Naive thymus-derived CD4-positive, alpha-beta T cell (primary cell): ENCODE measurements at regions of chr19 and their contacts with region 1.

Region 1: DNA sequence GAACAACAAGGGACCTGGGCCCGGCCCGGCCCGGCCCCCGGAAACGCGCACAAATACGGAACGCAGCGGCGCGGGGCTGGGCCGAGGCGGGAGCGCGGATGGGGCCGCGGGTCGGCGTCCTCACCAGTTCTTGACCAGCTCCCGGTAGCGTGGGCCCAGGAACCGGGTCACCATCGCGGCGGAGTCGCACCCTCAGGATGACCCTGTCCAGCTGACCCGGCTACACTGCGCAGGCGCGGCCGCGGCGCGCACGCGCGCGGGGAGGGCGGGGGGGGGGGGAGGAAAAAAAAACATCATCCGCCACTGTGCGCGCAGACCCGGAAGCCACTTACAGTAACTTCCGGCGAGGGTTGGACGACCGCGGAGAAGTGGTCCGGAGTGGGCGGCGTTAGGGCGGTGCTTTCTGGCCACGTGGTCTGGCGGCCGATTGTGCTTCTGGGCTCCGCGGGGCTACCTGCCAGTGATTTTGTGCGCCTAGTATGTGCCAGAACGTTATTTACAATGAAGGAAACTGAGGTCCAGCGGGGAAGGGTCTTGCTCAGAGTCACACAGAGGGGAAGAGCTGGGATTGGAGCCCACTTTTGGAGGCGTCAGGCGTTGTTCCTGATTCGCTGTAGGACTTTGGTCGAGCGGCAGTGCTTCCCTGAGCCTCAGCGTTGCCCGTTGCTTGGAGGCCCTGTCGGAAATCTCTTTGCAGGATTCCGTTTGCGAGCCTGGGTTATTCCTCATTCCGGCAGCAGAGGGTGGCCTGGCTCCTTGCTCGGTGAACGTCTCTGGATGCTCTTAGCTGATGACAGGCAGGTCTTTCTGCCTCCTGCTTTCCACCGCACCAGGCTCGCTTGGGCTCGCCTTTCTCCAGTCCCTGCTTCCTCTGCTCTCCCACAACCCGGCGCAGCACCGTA is at the start of gene UQCR11:
- DNase-seq: peak; percentile 76 to 94 (median 91)
- ATAC-seq: peak; percentile 89
- H3K4me3 ChIP-seq: peak within 1 kb of the TSS; percentile 79
- H3K4me3 Mint-ChIP-seq: peak within 1 kb of the TSS; percentile 92 to 99 (median 96)
- H3K27ac ChIP-seq: peak within 1 kb of the TSS; percentile 97
- H3K27ac Mint-ChIP-seq: peak within 1 kb of the TSS; percentile 92 to 100 (median 98)
- H3K4me1 ChIP-seq: peaks cover 28 to 40% of the 10 kb centered on the region in 2 donors
- H3K4me1 Mint-ChIP-seq: peaks cover 20 to 63% (median 44%) of the 10 kb centered on the region in 7 donors
- H3K27me3 ChIP-seq: no peaks in the 10 kb centered on the region
- H3K27me3 Mint-ChIP-seq: no peaks in the 10 kb centered on the region
- total RNA-seq, gene UQCR11: 94.3 to 170 (median 123) TPM

Region 2: DNA sequence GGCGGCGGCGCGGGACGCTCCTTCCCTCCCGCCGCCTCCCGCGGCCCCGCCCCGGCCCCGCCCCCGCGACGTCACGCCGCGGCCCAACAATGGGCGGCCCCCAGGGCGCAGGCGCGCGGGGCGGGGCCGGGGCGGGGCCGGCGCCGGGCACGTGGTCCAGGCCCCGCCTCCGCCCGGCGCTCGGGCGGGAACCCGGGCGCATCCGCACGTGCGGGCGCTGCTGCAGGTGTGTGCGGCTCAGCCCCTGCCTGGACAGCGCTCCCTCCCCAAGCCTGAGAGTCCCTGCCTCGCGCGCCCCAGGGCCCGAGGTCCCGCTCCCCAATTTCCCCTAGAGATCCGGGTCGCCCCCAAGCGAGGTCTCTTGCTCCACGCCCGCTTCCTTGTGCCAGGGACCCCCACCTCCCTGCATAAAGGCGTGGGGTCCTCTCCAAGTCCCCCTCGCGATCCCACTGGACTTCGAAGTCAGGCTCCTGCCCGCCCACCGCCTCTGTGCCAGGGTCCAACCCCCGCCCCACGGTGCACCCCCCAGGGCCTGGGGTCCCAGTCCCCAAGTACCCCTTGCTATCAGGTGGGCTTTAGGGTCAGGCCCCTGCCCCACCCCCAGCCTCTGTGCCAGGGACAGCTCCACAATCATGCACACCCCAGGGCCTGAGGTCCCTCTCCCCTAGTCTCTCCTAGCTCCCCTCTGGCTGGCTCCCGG is 37.0 kb before region 1 on chr19 and contains the start of gene MEX3D:
- CTCF ChIA-PET with region 1: interaction called, 3 read pairs
- POLR2A ChIA-PET with region 1: interaction called, 3 read pairs
- intact Hi-C with region 1: loop called in 1 of 2 experiments (anchors 1 kb)
- DNase-seq: peak; percentile 64 to 86 (median 81)
- ATAC-seq: peak; percentile 98
- H3K4me3 ChIP-seq: no peak within 1 kb of the TSS
- H3K4me3 Mint-ChIP-seq: peak within 1 kb of the TSS in 8 of 10 donors; percentile 3 to 78 (median 50)
- H3K27ac ChIP-seq: no peak within 1 kb of the TSS
- H3K27ac Mint-ChIP-seq: peak within 1 kb of the TSS in 1 of 9 donors; percentile 52
- H3K4me1 ChIP-seq: peaks cover 5 to 6% of the 10 kb centered on the region in 2 donors
- H3K4me1 Mint-ChIP-seq: peaks cover 0 to 8% (median 3%) of the 10 kb centered on the region in 7 donors
- H3K27me3 ChIP-seq: no peaks in the 10 kb centered on the region
- H3K27me3 Mint-ChIP-seq: peaks cover 0 to 32% (median 6%) of the 10 kb centered on the region in 5 donors
- total RNA-seq, gene MEX3D: 2.1 to 8.3 (median 2.3) TPM

Region 3: GRCh38 chr19:1652471-1653299 is 47.2 kb after region 1 on chr19 and contains the start of gene TCF3:
- CTCF ChIA-PET with region 1: interaction called, 11 read pairs
- POLR2A ChIA-PET with region 1: interaction called, 50 read pairs
- intact Hi-C with region 1: loop called (anchors 1 kb)
- DNase-seq: peak; percentile 96 to 100 (median 99)
- ATAC-seq: peak; percentile 96
- H3K4me3 ChIP-seq: peak within 1 kb of the TSS; percentile 86
- H3K4me3 Mint-ChIP-seq: peak within 1 kb of the TSS; percentile 86 to 96 (median 91)
- H3K27ac ChIP-seq: peak within 1 kb of the TSS; percentile 99
- H3K27ac Mint-ChIP-seq: peak within 1 kb of the TSS; percentile 87 to 98 (median 95)
- H3K4me1 ChIP-seq: peaks cover 4 to 8% of the 10 kb centered on the region in 2 donors
- H3K4me1 Mint-ChIP-seq: peaks cover 7 to 14% (median 10%) of the 10 kb centered on the region in 7 donors
- H3K27me3 ChIP-seq: no peaks in the 10 kb centered on the region
- H3K27me3 Mint-ChIP-seq: peaks cover 0 to 4% (median 0%) of the 10 kb centered on the region in 5 donors
- total RNA-seq, gene TCF3: 66.6 to 83.6 (median 78.3) TPM

Region 4: DNA sequence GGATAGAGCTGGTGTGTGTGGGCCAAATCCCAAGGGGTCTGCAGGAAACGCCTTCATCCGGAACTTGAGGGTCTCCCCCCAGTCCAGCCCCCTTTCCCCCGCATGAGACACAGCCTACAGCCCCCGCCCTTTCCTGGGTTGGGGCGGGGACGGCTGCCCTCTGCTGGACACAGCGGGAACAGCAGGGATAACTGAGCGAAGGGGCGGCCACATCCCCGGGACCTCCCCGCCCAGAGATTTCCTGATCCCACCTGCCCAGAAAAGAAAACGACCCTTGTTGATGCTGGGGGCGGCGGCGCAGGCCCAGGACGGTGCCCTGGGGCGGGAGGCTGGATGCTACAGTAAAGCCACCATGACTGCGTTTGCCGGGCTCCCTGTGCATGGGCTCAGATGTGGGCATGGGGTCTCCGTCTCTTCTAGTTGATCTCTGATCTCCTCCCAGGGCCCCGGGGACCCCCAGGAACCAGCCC is 162.0 kb after region 1 on chr19:
- CTCF ChIA-PET with region 1: no interaction called
- POLR2A ChIA-PET with region 1: no interaction called
- intact Hi-C with region 1: loop called in 1 of 2 experiments (anchors 1 kb)
- DNase-seq: peak; percentile 26 to 77 (median 60)
- ATAC-seq: peak; percentile 89
- H3K4me3 ChIP-seq: no peak overlapping the region
- H3K4me3 Mint-ChIP-seq: no peak overlapping the region
- H3K27ac ChIP-seq: no peak overlapping the region
- H3K27ac Mint-ChIP-seq: no peak overlapping the region
- H3K4me1 ChIP-seq: no peaks in the 10 kb centered on the region
- H3K4me1 Mint-ChIP-seq: no peaks in the 10 kb centered on the region
- H3K27me3 ChIP-seq: peaks cover 13 to 16% of the 10 kb centered on the region in 2 donors
- H3K27me3 Mint-ChIP-seq: peaks cover 58 to 86% (median 66%) of the 10 kb centered on the region in 5 donors

Region 5: GRCh38 chr19:1789261-1790041 is 184.0 kb after region 1 on chr19:
- CTCF ChIA-PET with region 1: no interaction called
- POLR2A ChIA-PET with region 1: no interaction called
- intact Hi-C with region 1: no loop called
- DNase-seq: no peak
- ATAC-seq: no peak
- H3K4me3 ChIP-seq: no peak overlapping the region
- H3K4me3 Mint-ChIP-seq: peak overlapping the region in 2 of 10 donors; percentile 5 to 34
- H3K27ac ChIP-seq: no peak overlapping the region
- H3K27ac Mint-ChIP-seq: no peak overlapping the region
- H3K4me1 ChIP-seq: no peaks in the 10 kb centered on the region
- H3K4me1 Mint-ChIP-seq: peaks cover 0 to 2% (median 0%) of the 10 kb centered on the region in 7 donors
- H3K27me3 ChIP-seq: no peaks in the 10 kb centered on the region
- H3K27me3 Mint-ChIP-seq: peaks cover 4 to 15% (median 5%) of the 10 kb centered on the region in 5 donors

Region 6: DNA sequence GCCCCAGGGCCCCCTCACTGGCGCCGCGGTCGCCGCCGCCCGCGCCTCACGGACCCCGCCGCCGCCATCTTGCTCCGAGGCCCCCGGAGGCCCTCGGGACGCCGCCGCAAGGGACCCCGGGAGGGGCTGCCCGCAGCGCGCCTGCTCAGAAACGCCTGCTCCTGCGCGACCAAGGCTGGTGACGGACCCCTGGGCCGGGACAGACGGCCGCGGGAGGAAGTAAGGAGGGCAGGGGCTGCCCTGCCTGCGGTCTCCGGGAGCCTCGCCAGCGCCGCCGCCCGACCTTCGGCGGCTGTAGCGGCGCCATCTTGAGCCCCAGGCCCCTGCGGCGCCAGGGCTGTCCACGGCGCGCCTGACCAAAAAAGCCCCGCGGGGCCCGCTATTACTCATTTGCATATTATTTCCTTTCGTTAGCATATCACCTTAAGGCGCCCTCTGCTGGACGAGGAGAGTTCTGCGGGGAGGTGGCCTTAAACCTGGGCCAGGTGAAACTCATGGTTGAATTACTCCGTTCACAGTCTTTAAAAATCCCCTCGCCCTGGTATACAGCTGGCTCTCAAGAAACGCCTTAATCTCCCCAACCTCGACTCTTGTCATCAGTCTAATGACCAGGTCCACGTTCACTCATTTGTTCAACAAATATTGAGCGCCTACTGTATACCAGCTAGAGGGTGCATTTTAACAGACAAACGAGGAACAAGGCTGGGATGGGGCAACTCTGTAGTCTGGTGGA is 243.1 kb after region 1 on chr19 and contains the start of gene REXO1:
- CTCF ChIA-PET with region 1: no interaction called
- POLR2A ChIA-PET with region 1: no interaction called
- intact Hi-C with region 1: loop called (anchors 1 to 2 kb)
- DNase-seq: peak; percentile 96 to 100 (median 98)
- ATAC-seq: peak; percentile 90
- H3K4me3 ChIP-seq: peak within 1 kb of the TSS; percentile 85
- H3K4me3 Mint-ChIP-seq: peak within 1 kb of the TSS; percentile 83 to 95 (median 91)
- H3K27ac ChIP-seq: peak within 1 kb of the TSS; percentile 99
- H3K27ac Mint-ChIP-seq: peak within 1 kb of the TSS; percentile 85 to 95 (median 93)
- H3K4me1 ChIP-seq: peaks cover 30 to 67% of the 10 kb centered on the region in 2 donors
- H3K4me1 Mint-ChIP-seq: peaks cover 36 to 72% (median 52%) of the 10 kb centered on the region in 7 donors
- H3K27me3 ChIP-seq: no peaks in the 10 kb centered on the region
- H3K27me3 Mint-ChIP-seq: no peaks in the 10 kb centered on the region
- total RNA-seq, gene REXO1: 52.7 to 92.6 (median 73.1) TPM

Region 7: DNA sequence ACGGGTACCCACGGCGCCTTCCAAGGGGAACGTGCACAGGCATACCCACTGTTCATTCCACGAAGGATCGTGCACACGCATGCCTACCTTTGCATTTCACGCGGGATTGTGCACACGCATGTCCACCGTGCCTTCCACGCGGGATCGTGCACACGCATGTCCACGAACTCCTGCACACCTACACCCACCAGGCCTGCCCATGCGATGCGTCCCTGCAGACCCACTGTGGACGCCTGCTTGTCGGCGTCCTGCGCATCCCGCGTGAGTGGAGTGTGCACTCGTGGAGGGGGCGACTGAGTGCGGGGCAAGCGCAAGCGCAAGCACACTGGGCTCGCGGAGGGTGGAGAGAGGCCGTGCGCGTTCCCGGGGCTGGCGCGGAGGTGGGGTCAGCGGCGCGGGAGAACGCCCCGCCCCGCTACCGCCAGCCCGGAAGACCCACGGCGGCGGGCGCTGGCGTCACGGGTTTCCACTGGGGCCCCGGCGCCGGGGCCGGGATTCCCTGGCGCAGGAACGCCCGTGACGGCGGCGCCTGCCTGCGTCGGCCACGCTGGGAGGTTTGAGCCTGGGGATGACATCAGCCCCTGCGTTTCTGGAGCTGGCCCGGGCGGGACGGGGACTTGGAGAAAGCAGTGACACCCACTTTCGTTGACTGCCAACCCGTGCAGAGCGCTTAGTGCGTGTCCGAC is 889.1 kb after region 1 on chr19:
- CTCF ChIA-PET with region 1: no interaction called
- POLR2A ChIA-PET with region 1: no interaction called
- intact Hi-C with region 1: no loop called
- DNase-seq: peak in 8 of 9 donors; percentile 22 to 75 (median 33)
- ATAC-seq: peak; percentile 73
- H3K4me3 ChIP-seq: peak overlapping the region; percentile 77
- H3K4me3 Mint-ChIP-seq: peak overlapping the region; percentile 67 to 87 (median 77)
- H3K27ac ChIP-seq: peak overlapping the region; percentile 69
- H3K27ac Mint-ChIP-seq: peak overlapping the region in 4 of 9 donors; percentile 19 to 65 (median 43)
- H3K4me1 ChIP-seq: peaks cover 7 to 14% of the 10 kb centered on the region in 2 donors
- H3K4me1 Mint-ChIP-seq: peaks cover 4 to 38% (median 30%) of the 10 kb centered on the region in 7 donors
- H3K27me3 ChIP-seq: peaks cover 2 to 4% of the 10 kb centered on the region in 2 donors
- H3K27me3 Mint-ChIP-seq: peaks cover 20 to 52% (median 24%) of the 10 kb centered on the region in 5 donors